CD8-positive, alpha-beta T cell (primary cell): ENCODE measurements at regions of chr2 and their contacts with region 1.

Region 1: GRCh38 chr2:170723446-170723958 is 8.4 kb downstream of the SP5 start:
- DNase-seq: no peak
- ATAC-seq: no peak
- H3K4me3 ChIP-seq: no peak overlapping the region
- H3K4me3 Mint-ChIP-seq: no peak overlapping the region
- H3K27ac ChIP-seq: no peak overlapping the region
- H3K27ac Mint-ChIP-seq: no peak overlapping the region
- H3K4me1 ChIP-seq: no peaks in the 10 kb centered on the region
- H3K4me1 Mint-ChIP-seq: no peaks in the 10 kb centered on the region
- H3K27me3 ChIP-seq: peaks cover under 1 to 9% of the 10 kb centered on the region in 2 experiments
- H3K27me3 Mint-ChIP-seq: peaks cover 66% of the 10 kb centered on the region
- CTCF ChIP-seq: no peak

Region 2: DNA sequence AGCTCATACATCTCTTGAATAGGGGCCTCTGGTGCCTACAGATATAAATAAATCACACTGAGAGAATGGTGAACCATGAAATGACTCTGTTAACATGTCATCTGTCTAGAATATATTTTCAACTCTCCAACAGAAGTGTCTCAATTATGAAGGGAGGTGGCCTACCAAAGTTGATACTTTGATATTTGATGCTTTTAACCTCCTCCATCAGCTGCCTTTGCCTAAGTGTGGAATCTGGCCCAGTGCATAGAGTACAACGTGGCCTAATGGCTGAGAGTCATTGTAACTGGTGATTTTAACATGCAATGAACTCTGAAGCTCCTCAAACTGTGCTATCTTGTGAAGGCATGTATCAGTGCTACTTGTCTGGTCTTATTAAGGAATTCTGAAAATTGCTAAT is 452.2 kb before region 1 on chr2:
- CTCF ChIA-PET with region 1: no interaction called
- POLR2A ChIA-PET with region 1: no interaction called
- intact Hi-C with region 1: no loop called
- DNase-seq: no peak
- ATAC-seq: no peak
- H3K4me3 ChIP-seq: no peak overlapping the region
- H3K4me3 Mint-ChIP-seq: no peak overlapping the region
- H3K27ac ChIP-seq: no peak overlapping the region
- H3K27ac Mint-ChIP-seq: no peak overlapping the region
- H3K4me1 ChIP-seq: no peaks in the 10 kb centered on the region
- H3K4me1 Mint-ChIP-seq: no peaks in the 10 kb centered on the region
- H3K27me3 ChIP-seq: no peaks in the 10 kb centered on the region
- H3K27me3 Mint-ChIP-seq: peaks cover 6% of the 10 kb centered on the region
- CTCF ChIP-seq: no peak

Region 3: GRCh38 chr2:170770606-170771420 is 47.3 kb after region 1 on chr2:
- CTCF ChIA-PET with region 1: no interaction called
- POLR2A ChIA-PET with region 1: no interaction called
- intact Hi-C with region 1: loop called (anchors 5 kb)
- DNase-seq: peak; percentile 29 to 86 (median 51)
- ATAC-seq: peak; percentile 84
- H3K4me3 ChIP-seq: peak overlapping the region; percentile 63 to 74
- H3K4me3 Mint-ChIP-seq: peak overlapping the region; percentile 82
- H3K27ac ChIP-seq: peak overlapping the region in 1 of 2 experiments; percentile 23
- H3K27ac Mint-ChIP-seq: no peak overlapping the region
- H3K4me1 ChIP-seq: peaks cover 12% of the 10 kb centered on the region
- H3K4me1 Mint-ChIP-seq: peaks cover 12% of the 10 kb centered on the region
- H3K27me3 ChIP-seq: no peaks in the 10 kb centered on the region
- H3K27me3 Mint-ChIP-seq: peaks cover 10% of the 10 kb centered on the region
- CTCF ChIP-seq: no peak